Heart left ventricle (tissue), 16 donors: ENCODE measurements at regions of chr2 and their contacts with region 1.

Region 1: DNA sequence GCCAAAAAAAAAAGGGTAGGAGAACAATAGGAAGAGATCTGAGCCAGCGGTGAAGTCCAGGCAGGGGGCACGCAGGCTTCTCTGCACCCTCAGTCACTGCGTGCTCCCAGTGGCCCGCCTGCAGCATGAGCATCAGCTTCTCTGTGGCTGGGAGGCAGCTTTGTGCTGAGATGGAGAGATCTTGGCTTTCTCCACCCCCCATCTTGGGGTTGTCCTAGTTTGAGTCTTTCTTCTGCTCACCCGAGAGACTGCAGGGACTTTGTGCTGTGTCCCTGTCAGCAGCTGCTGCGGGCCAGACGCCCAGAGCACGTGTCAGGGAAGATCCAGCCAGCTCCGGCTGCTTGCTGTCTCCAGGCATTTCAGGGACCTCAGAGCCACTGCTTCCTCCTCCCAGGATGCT is 20.3 kb downstream of the TRAPPC12 start:
- DNase-seq: peak; percentile 70 to 85 (median 73)
- ATAC-seq: peak; percentile 89 to 98 (median 92)
- H3K4me3 ChIP-seq: peak overlapping the region in 2 of 12 donors; percentile 8 to 27
- H3K27ac ChIP-seq: peak overlapping the region in 7 of 12 donors; percentile 21 to 62 (median 33)
- H3K4me1 ChIP-seq: peaks cover 3 to 31% (median 18%) of the 10 kb centered on the region in 12 donors
- H3K27me3 ChIP-seq: no peaks in the 10 kb centered on the region
- CTCF ChIP-seq: no peak
- POLR2A ChIP-seq: no peak

Region 2: GRCh38 chr2:3324404-3325281 is 75.2 kb before region 1 on chr2:
- intact Hi-C with region 1: loop called in 1 of 10 experiments (anchors 2 kb)
- DNase-seq: no peak
- ATAC-seq: no peak
- H3K4me3 ChIP-seq: no peak overlapping the region
- H3K27ac ChIP-seq: no peak overlapping the region
- H3K4me1 ChIP-seq: no peaks in the 10 kb centered on the region
- H3K27me3 ChIP-seq: no peaks in the 10 kb centered on the region
- CTCF ChIP-seq: no peak
- POLR2A ChIP-seq: no peak